ENCODE measurements at regions of chr9 and their contacts with region 1.

Region 1: DNA sequence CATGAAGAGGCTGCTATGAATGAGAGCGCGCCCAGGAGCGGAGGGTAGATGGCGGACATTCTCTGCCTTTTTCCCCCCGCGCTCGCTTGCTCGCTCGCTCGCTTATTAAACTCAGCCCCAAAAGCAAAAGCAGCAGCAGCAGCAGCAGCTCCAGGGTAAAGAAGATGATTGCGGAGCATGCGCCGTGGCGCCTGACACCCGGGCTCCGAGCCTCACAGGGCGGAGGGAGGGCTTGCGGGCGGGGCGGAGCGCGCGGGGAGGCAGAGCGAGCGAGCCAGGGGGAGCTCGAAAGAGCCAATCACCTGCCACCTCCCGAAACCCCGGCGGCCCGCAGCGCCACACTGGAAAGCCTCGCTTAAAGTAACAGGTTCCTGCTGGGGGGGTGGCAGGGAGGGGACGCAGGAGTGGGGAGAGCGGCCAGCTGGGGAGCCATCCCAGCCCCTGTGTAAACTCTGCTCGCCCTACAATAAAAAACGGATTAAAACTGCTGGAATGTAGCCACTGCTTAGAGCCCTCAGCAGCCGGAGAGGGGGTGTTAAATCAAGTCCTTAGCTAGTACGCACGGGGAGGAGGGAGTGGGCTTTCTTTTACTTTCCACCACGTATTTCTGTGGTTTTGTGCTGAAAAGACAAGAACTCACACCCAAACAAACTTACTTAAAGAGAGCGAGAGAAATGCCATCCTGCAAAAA is at the start of gene MLLT3:
- DNase-seq: peak; percentile 95
- ATAC-seq: peak; percentile 92
- H3K4me3 ChIP-seq: peak within 1 kb of the TSS; percentile 93
- H3K27ac ChIP-seq: peak within 1 kb of the TSS; percentile 91
- H3K4me1 ChIP-seq: peaks cover 6% of the 10 kb centered on the region
- H3K27me3 ChIP-seq: no peaks in the 10 kb centered on the region
- CTCF ChIP-seq: no peak
- POLR2A ChIP-seq: no peak
- RAD21 ChIP-seq: no peak; the same call in 1 of the 2 replicates
- total RNA-seq, gene MLLT3: 21.1 and 24.4 TPM in 2 replicates

Region 2: DNA sequence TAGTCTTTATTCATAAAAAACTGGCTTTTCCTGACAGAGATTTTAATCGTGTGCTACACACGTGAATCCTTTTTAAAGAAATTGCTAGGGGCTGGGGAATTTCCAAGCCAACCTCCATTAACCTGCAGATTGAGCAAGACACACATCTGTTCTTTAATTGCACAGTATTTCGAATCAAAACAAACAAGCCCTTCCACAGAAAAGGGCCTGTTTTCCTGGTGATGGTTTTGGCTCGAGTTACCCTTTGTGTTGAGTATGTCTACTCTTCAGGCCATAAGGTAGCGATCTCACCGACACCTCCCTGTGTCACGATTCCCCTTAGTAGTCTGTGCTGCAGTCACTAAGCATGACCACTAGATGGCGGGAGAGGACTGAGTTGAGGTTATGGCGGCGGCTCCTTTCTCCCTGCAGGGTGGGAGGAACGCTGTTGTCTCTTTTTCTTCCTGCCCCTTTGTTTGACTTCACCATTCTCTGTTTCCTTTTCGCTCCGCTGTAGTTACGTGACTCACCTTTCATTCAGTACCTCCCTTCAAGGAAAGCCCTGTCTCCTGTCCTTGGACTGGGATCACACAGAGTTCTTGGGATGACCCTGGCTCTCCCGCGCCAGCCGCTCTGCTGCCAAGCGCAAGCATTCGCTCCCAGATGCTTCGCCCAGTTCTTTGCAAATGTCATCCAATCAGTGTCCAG is 696.5 kb before region 1 on chr9:
- CTCF ChIA-PET with region 1: no interaction called
- POLR2A ChIA-PET with region 1: interaction called, 4 read pairs
- dilution Hi-C with region 1: no loop called
- in situ Hi-C with region 1: loop called (anchors 5 kb)
- intact Hi-C with region 1: loop called (anchors 1 kb)
- DNase-seq: peak; percentile 68
- ATAC-seq: peak; percentile 98
- H3K4me3 ChIP-seq: peak overlapping the region; percentile 56
- H3K27ac ChIP-seq: no peak overlapping the region
- H3K4me1 ChIP-seq: no peaks in the 10 kb centered on the region
- H3K27me3 ChIP-seq: peaks cover 15% of the 10 kb centered on the region
- CTCF ChIP-seq: peak; percentile 96
- POLR2A ChIP-seq: 0 out of 2 replicates have a peak, but pooled peaks have one; percentile 29
- RAD21 ChIP-seq: peak; percentile 98

Region 3: GRCh38 chr9:20526500-20527319 is 95.8 kb before region 1 on chr9:
- CTCF ChIA-PET with region 1: interaction called, 11 read pairs
- POLR2A ChIA-PET with region 1: no interaction called
- dilution Hi-C with region 1: no loop called
- in situ Hi-C with region 1: no loop called
- intact Hi-C with region 1: no loop called
- DNase-seq: peak; percentile 44
- ATAC-seq: peak; percentile 61
- H3K4me3 ChIP-seq: no peak overlapping the region
- H3K27ac ChIP-seq: no peak overlapping the region
- H3K4me1 ChIP-seq: no peaks in the 10 kb centered on the region; the same call in 1 of the 2 replicates
- H3K27me3 ChIP-seq: no peaks in the 10 kb centered on the region
- CTCF ChIP-seq: peak; percentile 32
- POLR2A ChIP-seq: no peak
- RAD21 ChIP-seq: 0 out of 2 replicates have a peak, but pooled peaks have one; percentile 8

Region 4: DNA sequence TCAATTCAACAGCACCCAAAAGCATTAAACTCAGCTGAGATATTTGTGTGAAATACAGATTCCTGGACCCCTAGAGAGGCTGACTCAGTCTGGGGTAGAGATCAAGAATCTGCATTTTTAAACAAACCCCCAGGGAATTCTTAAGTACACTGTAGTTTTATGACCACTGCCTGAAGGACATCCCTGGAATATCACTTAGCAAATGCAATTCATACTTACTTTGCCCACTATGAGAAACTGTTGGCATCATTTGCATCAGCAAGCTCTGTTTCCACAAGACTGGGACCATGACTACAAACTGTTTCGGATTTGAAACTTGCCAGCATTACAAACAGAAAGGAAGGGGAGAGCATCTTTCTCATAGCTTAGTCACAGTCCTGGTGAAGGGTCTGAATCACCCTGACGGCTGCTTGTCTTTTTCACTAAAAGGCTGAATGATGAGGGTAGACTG is 63.9 kb before region 1 on chr9:
- CTCF ChIA-PET with region 1: interaction called, 3 read pairs
- POLR2A ChIA-PET with region 1: no interaction called
- dilution Hi-C with region 1: no loop called
- in situ Hi-C with region 1: no loop called
- intact Hi-C with region 1: loop called (anchors 2 kb)
- DNase-seq: peak; percentile 93
- ATAC-seq: peak; percentile 87
- H3K4me3 ChIP-seq: no peak overlapping the region
- H3K27ac ChIP-seq: peak overlapping the region; percentile 60; the same call in 1 of the 2 replicates
- H3K4me1 ChIP-seq: peaks cover 10% of the 10 kb centered on the region
- H3K27me3 ChIP-seq: no peaks in the 10 kb centered on the region
- CTCF ChIP-seq: no peak
- POLR2A ChIP-seq: no peak
- RAD21 ChIP-seq: no peak

Region 5: DNA sequence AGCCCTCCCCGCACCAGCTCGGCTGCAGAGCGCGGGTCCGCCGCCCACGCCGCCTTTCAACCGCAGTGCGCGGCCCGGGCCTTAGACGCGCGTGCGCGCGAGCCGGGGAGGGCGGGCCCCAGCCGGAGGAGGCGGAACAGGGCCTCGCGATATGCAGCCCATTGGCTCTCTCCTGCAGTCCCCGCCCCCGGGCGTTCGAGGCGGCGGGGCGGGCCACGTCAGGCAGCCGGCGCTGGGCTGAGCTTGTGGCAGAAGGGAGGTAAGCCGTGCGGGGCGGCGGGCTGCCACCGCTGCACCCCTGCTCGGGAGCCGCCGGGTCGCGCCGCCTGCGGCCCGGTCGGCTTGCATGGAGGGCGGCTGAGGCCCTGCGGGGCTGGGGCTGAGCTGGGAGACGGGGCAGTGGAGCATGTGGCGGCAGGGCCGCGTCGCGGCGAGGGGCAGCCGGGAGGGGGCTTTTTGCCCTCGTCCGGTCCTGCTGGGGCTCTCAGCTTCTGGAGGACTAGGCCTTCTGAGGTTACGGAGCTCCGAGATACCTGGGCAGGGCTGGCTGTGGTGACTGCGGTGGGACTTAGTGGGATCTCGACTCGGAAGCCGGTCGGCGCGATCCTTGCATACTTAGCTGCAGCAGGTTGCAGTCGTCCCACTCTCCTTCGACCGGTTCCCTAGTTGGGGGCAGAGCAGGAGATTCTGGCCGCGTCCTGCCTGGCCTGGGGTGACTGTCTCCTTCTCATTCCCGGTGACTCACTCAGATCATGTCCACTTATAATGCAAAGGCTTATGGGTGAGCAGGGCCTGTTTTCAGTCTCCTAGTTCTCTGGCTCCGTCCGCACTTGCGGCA is 61.8 kb after region 1 on chr9 and contains the start of gene FOCAD:
- CTCF ChIA-PET with region 1: no interaction called
- POLR2A ChIA-PET with region 1: interaction called, 3 read pairs
- dilution Hi-C with region 1: no loop called
- in situ Hi-C with region 1: no loop called
- intact Hi-C with region 1: loop called (anchors 2 kb)
- DNase-seq: peak; percentile 92
- ATAC-seq: peak; percentile 99
- H3K4me3 ChIP-seq: peak within 1 kb of the TSS; percentile 60
- H3K27ac ChIP-seq: peak within 1 kb of the TSS; percentile 61
- H3K4me1 ChIP-seq: 0 out of 2 replicates have a peak, but pooled peaks cover under 1% of the 10 kb centered on the region
- H3K27me3 ChIP-seq: no peaks in the 10 kb centered on the region
- CTCF ChIP-seq: no peak
- POLR2A ChIP-seq: peak; percentile 95
- RAD21 ChIP-seq: no peak
- total RNA-seq, gene FOCAD: 73.9 and 91.2 TPM in 2 replicates

Region 6: DNA sequence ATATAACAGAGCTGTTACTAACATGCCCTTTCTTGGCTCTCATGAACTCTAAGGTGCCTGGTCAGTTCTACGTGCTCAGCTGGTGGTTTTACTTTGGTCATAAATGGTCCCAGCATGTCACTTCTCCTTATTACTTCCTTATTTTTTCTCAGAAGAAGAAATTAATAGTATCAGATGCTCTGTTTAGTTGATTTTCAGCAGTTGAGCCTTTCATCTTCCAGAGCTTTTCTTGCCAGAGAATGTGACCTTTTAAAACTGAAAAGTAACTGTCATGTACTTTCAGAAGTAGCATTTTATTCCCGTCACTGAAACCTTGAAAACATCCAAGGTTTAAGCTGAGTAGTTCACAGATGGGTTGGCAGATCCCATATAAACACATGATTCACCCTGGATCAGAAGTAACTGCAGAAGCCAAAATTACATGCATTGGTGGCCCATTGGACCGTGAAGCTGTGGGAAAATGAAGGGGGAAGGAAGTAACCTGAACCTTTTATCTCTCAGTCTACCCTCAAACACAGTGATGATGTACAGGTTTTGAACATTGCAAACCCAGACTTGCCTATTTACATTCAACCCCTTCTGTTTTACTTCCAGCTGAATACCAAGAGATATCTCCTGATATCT is 358.5 kb after region 1 on chr9:
- CTCF ChIA-PET with region 1: no interaction called
- POLR2A ChIA-PET with region 1: interaction called, 4 read pairs
- dilution Hi-C with region 1: no loop called
- in situ Hi-C with region 1: no loop called
- intact Hi-C with region 1: loop called (anchors 5 kb)
- DNase-seq: peak; percentile 93
- ATAC-seq: peak; percentile 77
- H3K4me3 ChIP-seq: no peak overlapping the region
- H3K27ac ChIP-seq: peak overlapping the region; percentile 79; the same call in 1 of the 2 replicates
- H3K4me1 ChIP-seq: peaks cover 15% of the 10 kb centered on the region
- H3K27me3 ChIP-seq: no peaks in the 10 kb centered on the region
- CTCF ChIP-seq: no peak
- POLR2A ChIP-seq: no peak
- RAD21 ChIP-seq: no peak

Region 7: GRCh38 chr9:21110708-21111576 is 488.5 kb after region 1 on chr9:
- CTCF ChIA-PET with region 1: interaction called, 14 read pairs
- POLR2A ChIA-PET with region 1: no interaction called
- dilution Hi-C with region 1: no loop called
- in situ Hi-C with region 1: loop called (anchors 5 kb)
- intact Hi-C with region 1: loop called (anchors 1 kb)
- DNase-seq: peak; percentile 82
- ATAC-seq: peak; percentile 93
- H3K4me3 ChIP-seq: no peak overlapping the region
- H3K27ac ChIP-seq: no peak overlapping the region
- H3K4me1 ChIP-seq: no peaks in the 10 kb centered on the region
- H3K27me3 ChIP-seq: no peaks in the 10 kb centered on the region
- CTCF ChIP-seq: peak; percentile 90
- POLR2A ChIP-seq: no peak
- RAD21 ChIP-seq: peak; percentile 97

Region 8: DNA sequence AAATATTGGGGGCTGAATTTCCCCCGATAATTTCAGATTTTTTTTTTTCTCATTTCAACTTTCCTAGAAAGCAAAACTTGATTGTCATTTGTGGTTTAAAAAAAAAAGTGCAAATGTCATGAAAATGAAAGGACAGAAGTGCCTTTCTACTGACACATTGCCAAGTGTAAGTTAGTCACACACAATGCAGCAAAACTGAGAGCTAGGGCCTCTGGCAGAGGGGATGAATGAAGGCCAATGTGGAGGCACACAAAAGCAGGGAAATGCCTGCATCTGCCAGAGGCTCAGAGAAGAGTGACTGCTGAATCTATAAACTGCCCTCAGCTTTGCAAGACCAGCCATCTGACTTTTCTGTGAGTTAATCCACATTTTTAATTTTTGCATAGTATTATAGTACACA is 689.4 kb after region 1 on chr9:
- CTCF ChIA-PET with region 1: no interaction called
- POLR2A ChIA-PET with region 1: no interaction called
- dilution Hi-C with region 1: no loop called
- in situ Hi-C with region 1: no loop called
- intact Hi-C with region 1: no loop called
- DNase-seq: no peak
- ATAC-seq: no peak
- H3K4me3 ChIP-seq: no peak overlapping the region
- H3K27ac ChIP-seq: no peak overlapping the region
- H3K4me1 ChIP-seq: peaks cover 2% of the 10 kb centered on the region; the same call in 1 of the 2 replicates
- H3K27me3 ChIP-seq: peaks cover 12% of the 10 kb centered on the region
- CTCF ChIP-seq: no peak
- POLR2A ChIP-seq: no peak
- RAD21 ChIP-seq: no peak